HAP-1 (cell line): ENCODE measurements at regions of chr13 and their contacts with region 1.

Region 1: DNA sequence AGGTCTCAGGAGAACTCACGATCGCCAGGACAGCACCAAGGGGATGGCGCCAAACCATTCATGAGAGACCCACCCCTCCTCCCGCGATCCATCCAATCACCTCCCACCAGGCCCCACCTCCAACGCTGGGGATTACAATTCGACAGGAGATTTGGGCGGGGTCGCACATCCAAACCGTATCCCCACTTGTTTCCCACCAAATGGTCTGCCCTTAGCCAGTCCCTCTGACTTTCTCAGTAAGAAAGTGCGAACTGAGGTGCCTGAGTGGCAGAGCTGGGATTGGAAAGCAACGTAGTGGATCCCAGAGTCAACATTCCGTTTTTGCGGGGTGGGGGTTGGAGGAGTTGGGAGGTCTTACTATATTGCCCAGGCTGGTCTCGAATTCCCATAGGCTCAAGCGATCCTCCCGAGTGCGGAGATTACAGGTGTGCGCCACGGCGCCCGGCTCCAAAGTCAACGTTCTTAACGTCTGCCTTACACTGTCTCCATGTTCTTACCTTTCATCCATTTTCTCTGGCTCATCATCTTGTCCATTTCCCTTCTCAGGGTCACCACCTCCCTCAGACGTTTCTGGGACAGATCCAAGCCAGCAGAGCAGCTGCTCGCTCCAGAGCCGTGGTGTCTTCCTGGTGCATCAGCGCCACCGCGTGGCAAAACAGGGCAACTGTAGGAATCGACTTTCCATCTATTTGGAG is 102.7 kb upstream of the ABCC4 start:
- DNase-seq: peak; percentile 75 to 90
- H3K4me3 ChIP-seq: peak overlapping the region; percentile 24
- H3K4me1 ChIP-seq: peaks cover 6% of the 10 kb centered on the region; the same call in 1 of the 2 replicates
- H3K27me3 ChIP-seq: no peaks in the 10 kb centered on the region

Region 2: DNA sequence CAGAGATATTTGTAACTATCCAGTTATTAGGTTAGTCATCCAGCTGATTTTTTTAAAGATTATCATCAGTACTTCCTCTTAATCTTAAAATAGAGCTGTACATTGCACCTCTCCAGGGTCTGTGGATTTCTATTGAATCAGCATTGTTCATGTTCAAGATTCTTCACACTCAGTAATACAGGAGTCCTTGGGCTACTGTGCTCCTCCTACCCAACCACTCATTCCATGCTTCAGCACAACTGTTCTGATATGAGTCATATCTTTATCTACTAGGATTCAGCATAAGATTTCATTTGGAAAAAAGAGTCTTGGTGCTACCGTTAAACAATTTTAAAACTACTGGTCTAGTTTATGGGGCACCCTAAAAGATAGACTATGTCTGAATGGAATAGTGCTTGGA is 1282.3 kb before region 1 on chr13:
- in situ Hi-C with region 1: no loop called
- DNase-seq: no peak
- H3K4me3 ChIP-seq: no peak overlapping the region
- H3K4me1 ChIP-seq: peaks cover 8% of the 10 kb centered on the region; the same call in 1 of the 2 replicates
- H3K27me3 ChIP-seq: no peaks in the 10 kb centered on the region

Region 3: GRCh38 chr13:94641409-94641941 is 762.5 kb before region 1 on chr13:
- in situ Hi-C with region 1: loop called (anchors 25 kb)
- DNase-seq: no peak
- H3K4me3 ChIP-seq: no peak overlapping the region
- H3K4me1 ChIP-seq: no peaks in the 10 kb centered on the region
- H3K27me3 ChIP-seq: no peaks in the 10 kb centered on the region